CD4-positive, alpha-beta T cell (primary cell): ENCODE measurements at regions of chr4 and their contacts with region 1.

Region 1: DNA sequence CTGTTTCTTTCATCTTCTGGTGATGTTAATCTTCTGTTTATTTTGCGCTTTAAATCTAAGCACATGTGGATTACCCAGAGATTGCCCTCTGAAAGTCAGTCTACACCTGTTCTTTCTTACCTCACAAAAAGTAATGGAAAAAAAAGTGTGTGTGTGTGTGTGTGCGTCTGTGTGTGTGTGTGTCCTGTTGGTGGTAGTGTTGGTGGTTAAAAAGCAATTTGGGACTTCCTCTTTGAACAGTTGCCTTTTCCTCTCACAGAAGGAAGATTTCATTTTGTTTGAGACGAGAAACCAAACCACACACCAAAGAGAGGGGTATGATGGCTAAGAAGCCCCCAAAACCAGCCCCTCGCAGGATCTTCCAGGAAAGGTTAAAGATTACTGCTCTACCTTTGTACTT is at the start of gene STAP1:
- DNase-seq: peak in 7 of 14 experiments; percentile 12 to 71 (median 36)
- ATAC-seq: peak; percentile 84
- H3K4me3 ChIP-seq: peak within 1 kb of the TSS; percentile 37
- H3K4me3 Mint-ChIP-seq: peak within 1 kb of the TSS; percentile 89
- H3K27ac ChIP-seq: no peak within 1 kb of the TSS
- H3K27ac Mint-ChIP-seq: peak within 1 kb of the TSS; percentile 77
- H3K4me1 ChIP-seq: peaks cover 4% of the 10 kb centered on the region
- H3K4me1 Mint-ChIP-seq: peaks cover 48% of the 10 kb centered on the region
- H3K27me3 ChIP-seq: no peaks in the 10 kb centered on the region
- H3K27me3 Mint-ChIP-seq: no peaks in the 10 kb centered on the region
- CTCF ChIP-seq: no peak
- total RNA-seq, gene STAP1: 2.7 to 3.6 TPM

Region 2: DNA sequence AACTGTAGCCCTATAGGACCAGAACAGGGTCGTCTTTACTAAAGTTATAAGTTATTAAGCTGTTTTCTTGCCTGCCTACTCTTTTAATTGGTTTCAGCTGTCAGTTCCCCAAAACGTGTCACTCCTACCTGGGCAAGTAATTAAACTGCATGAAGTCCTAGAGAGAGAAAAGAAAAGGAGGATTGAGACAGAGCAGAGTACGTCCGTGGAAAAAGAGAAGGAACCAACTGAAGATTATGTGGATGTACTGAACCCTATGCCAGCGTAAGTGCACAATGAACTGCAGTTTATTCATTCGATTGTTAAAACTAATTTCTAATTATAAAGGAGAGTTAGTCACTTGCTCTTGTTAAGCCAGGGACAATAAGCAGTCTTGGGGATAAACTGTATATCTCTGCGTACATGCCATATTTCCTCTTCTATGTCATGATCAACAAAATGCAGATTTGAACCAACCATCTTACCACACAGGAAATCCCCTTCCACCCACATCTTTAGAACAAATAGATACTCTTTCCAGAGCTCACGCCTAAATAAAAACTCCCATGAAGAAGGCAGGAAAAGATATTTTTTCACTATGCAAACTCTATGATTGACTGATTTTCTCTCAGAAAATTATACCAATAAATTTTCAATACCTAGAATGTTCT is 22.8 kb after region 1 on chr4:
- CTCF ChIA-PET with region 1: interaction called, 3 read pairs
- POLR2A ChIA-PET with region 1: interaction called, 3 read pairs
- intact Hi-C with region 1: loop called in 1 of 2 experiments (anchors 2 kb)
- DNase-seq: peak in 3 of 14 experiments; percentile 58 to 78 (median 75)
- ATAC-seq: peak; percentile 94
- H3K4me3 ChIP-seq: peak overlapping the region; percentile 13
- H3K4me3 Mint-ChIP-seq: peak overlapping the region; percentile 63
- H3K27ac ChIP-seq: peak overlapping the region in 1 of 2 donors; percentile 6
- H3K27ac Mint-ChIP-seq: peak overlapping the region; percentile 75
- H3K4me1 ChIP-seq: peaks cover 16% of the 10 kb centered on the region
- H3K4me1 Mint-ChIP-seq: peaks cover 48% of the 10 kb centered on the region
- H3K27me3 ChIP-seq: no peaks in the 10 kb centered on the region
- H3K27me3 Mint-ChIP-seq: no peaks in the 10 kb centered on the region
- CTCF ChIP-seq: no peak